Posterior cingulate gyrus (tissue), 11 donors: ENCODE measurements at regions of chr3 and their contacts with region 1.

Region 1: GRCh38 chr3:10758304-10759061 is 57.5 kb upstream of the SLC6A11 start:
- DNase-seq: peak; percentile 53 to 96 (median 76)

Region 2: GRCh38 chr3:10205451-10206165 is 552.9 kb before region 1 on chr3:
- intact Hi-C with region 1: no loop called
- DNase-seq: peak in 2 of 10 donors; percentile 57 to 75

Region 3: GRCh38 chr3:10783357-10784351 is 25.2 kb after region 1 on chr3:
- intact Hi-C with region 1: loop called (anchors 2 kb)
- DNase-seq: peak in 1 of 10 donors; percentile 32

Region 4: GRCh38 chr3:10883478-10884234 is 125.2 kb after region 1 on chr3:
- intact Hi-C with region 1: loop called (anchors 2 kb)
- DNase-seq: peak in 3 of 10 donors; percentile 29 to 33 (median 29)